ENCODE measurements at regions of chr11 and their contacts with region 1.

Region 1: GRCh38 chr11:14249121-14249963 is 109.6 kb downstream of the RRAS2 start:
- DNase-seq: peak in 2 of 3 donors; percentile 47 to 73
- ATAC-seq: peak; percentile 67
- H3K4me3 ChIP-seq: no peak overlapping the region
- H3K27ac ChIP-seq: no peak overlapping the region
- H3K4me1 ChIP-seq: peaks cover 5% of the 10 kb centered on the region
- H3K27me3 ChIP-seq: no peaks in the 10 kb centered on the region

Region 2: DNA sequence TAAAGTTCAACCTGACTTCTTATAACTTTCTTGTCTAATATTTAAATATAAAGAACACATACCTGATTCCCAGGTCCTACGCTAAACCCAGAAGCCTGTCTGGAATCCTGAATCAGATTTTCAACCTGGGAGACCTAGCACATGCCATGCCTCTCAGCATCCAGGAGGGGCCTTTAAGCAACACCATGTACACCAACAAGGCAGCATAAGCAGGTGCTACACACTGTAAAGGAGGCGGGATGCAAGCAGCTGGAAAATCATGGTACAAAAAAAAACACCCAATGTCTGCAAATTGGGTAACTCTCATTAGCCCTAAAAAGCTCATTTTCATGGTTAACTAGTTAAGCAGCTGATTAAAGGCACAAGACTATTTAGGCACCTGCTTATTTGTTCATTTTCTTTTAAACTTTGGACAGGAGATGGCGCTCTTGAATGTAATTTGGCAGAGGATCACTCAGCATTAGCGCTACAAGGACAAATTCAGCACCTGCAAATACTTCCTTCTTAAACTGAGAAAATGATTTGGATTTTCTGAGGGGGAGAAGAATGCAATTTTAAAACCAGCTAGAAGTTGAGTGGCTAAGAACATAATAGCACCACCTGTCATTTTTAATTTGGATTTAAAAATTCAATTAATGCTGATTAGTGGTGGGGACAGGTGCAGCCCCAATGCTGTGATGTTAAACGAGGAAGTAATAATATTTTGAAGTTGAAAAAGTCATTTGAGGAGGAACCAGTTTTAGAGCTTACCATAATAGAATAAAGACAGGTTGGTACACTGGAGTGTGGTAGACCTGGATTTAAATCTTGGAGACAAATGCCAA is 476.9 kb before region 1 on chr11:
- intact Hi-C with region 1: loop called in 3 of 4 experiments (anchors 5 to 10 kb)
- DNase-seq: no peak
- ATAC-seq: no peak
- H3K4me3 ChIP-seq: no peak overlapping the region
- H3K27ac ChIP-seq: no peak overlapping the region
- H3K4me1 ChIP-seq: no peaks in the 10 kb centered on the region
- H3K27me3 ChIP-seq: no peaks in the 10 kb centered on the region

Region 3: DNA sequence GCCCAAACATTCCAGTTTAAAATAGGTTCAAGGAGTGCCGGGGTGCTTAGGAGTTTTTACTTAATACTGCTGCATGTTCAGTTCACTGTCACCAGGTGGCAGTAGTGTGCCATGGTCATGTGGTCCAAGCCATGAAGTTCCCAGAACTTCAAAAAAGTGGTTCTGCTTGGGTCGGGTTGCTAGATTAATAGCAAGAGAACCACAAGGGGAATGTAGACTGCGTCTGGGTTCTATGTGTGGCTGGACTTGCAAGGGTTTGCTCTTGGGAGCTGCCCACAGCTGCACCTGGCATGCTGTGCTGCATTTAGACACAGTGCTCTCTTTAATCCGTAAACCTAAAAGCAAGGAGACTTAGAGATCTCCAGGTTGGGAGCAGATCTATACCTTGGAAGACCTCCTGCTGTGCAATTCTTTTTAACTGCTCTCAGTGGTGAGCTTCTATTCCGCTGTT is 293.3 kb before region 1 on chr11:
- intact Hi-C with region 1: loop called (anchors 1 to 2 kb)
- DNase-seq: peak; percentile 44 to 73 (median 59)
- ATAC-seq: peak; percentile 67 to 75
- H3K4me3 ChIP-seq: no peak overlapping the region
- H3K27ac ChIP-seq: no peak overlapping the region
- H3K4me1 ChIP-seq: peaks cover 2% of the 10 kb centered on the region
- H3K27me3 ChIP-seq: no peaks in the 10 kb centered on the region

Region 4: GRCh38 chr11:14054116-14055107 is 194.9 kb before region 1 on chr11:
- intact Hi-C with region 1: no loop called
- DNase-seq: peak; percentile 54 to 80 (median 70)
- ATAC-seq: peak; percentile 74 to 83
- H3K4me3 ChIP-seq: no peak overlapping the region
- H3K27ac ChIP-seq: no peak overlapping the region
- H3K4me1 ChIP-seq: no peaks in the 10 kb centered on the region
- H3K27me3 ChIP-seq: no peaks in the 10 kb centered on the region

Region 5: GRCh38 chr11:14148653-14149273 is 100.6 kb before region 1 on chr11:
- intact Hi-C with region 1: no loop called
- DNase-seq: no peak
- ATAC-seq: peak; percentile 65 to 74
- H3K4me3 ChIP-seq: no peak overlapping the region
- H3K27ac ChIP-seq: no peak overlapping the region
- H3K4me1 ChIP-seq: no peaks in the 10 kb centered on the region
- H3K27me3 ChIP-seq: no peaks in the 10 kb centered on the region

Region 6: DNA sequence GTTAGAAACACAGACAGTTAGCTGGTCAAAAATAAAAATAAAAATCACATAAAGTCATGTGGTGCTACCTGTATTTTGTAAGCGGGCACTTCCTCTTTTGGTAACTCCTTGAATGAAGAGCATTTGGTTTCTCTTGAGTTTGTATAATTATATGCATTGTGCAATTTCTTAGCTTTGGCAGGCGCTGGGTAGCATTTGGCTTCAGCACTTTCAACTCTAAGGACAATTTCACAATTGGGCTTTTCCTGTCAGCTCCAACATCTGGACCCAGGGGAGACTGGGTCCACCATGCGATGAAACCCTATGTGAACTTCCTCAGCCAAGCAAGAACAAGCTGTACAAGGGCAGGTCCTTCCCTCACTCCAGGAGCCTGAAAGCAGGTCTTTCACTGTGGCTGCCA is 59.5 kb before region 1 on chr11:
- intact Hi-C with region 1: loop called in 1 of 4 experiments (anchors 10 kb)
- DNase-seq: peak; percentile 70 to 86 (median 72)
- ATAC-seq: peak; percentile 86 to 94
- H3K4me3 ChIP-seq: no peak overlapping the region
- H3K27ac ChIP-seq: no peak overlapping the region
- H3K4me1 ChIP-seq: peaks cover 10% of the 10 kb centered on the region
- H3K27me3 ChIP-seq: no peaks in the 10 kb centered on the region

Region 7: GRCh38 chr11:14320020-14320419 is 70.7 kb after region 1 on chr11:
- intact Hi-C with region 1: no loop called
- DNase-seq: no peak
- ATAC-seq: no peak
- H3K4me3 ChIP-seq: no peak overlapping the region
- H3K27ac ChIP-seq: no peak overlapping the region
- H3K4me1 ChIP-seq: peaks cover 2% of the 10 kb centered on the region
- H3K27me3 ChIP-seq: no peaks in the 10 kb centered on the region

Region 8: GRCh38 chr11:14727215-14727614 is 477.9 kb after region 1 on chr11:
- intact Hi-C with region 1: no loop called
- DNase-seq: no peak
- ATAC-seq: no peak
- H3K4me3 ChIP-seq: no peak overlapping the region
- H3K27ac ChIP-seq: no peak overlapping the region
- H3K4me1 ChIP-seq: no peaks in the 10 kb centered on the region
- H3K27me3 ChIP-seq: no peaks in the 10 kb centered on the region

Measured in right cardiac atrium (tissue), 5 donors.